ENCODE measurements at regions of chr1 and their contacts with region 1.

Region 1: GRCh38 chr1:172671591-172671990 is 12.7 kb downstream of the FASLG start:
- DNase-seq: no peak
- ATAC-seq: no peak
- H3K4me3 Mint-ChIP-seq: no peak overlapping the region
- H3K27ac Mint-ChIP-seq: no peak overlapping the region
- H3K4me1 Mint-ChIP-seq: peaks cover 71% of the 10 kb centered on the region
- H3K27me3 Mint-ChIP-seq: peaks cover 11% of the 10 kb centered on the region

Region 2: DNA sequence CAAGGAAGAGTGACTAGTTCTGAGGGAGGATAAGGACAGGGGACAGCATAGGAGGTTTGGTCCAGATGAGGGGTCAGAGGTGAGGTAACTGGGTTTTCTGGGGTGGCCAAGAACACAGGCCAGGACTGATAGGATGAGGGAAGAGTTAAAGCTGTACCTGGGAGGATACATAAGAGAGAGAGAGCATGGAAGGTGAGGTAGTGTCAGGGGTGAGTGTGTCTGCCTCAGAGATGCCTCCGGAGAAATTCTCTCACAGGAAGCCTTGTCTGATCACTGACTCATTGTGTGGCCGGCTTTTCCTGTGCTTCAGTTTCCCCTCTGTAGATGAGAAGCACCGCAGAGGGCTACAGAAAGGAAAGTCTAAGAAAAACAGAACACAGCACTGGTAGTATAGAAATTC is 27.5 kb after region 1 on chr1:
- CTCF ChIA-PET with region 1: interaction called, 6 read pairs
- POLR2A ChIA-PET with region 1: interaction called, 17 read pairs
- intact Hi-C with region 1: loop called (anchors 1 kb)
- DNase-seq: peak; percentile 82
- ATAC-seq: peak; percentile 80
- H3K4me3 Mint-ChIP-seq: peak overlapping the region; percentile 31
- H3K27ac Mint-ChIP-seq: peak overlapping the region; percentile 97
- H3K4me1 Mint-ChIP-seq: peaks cover 50% of the 10 kb centered on the region
- H3K27me3 Mint-ChIP-seq: peaks cover 4% of the 10 kb centered on the region

Region 3: DNA sequence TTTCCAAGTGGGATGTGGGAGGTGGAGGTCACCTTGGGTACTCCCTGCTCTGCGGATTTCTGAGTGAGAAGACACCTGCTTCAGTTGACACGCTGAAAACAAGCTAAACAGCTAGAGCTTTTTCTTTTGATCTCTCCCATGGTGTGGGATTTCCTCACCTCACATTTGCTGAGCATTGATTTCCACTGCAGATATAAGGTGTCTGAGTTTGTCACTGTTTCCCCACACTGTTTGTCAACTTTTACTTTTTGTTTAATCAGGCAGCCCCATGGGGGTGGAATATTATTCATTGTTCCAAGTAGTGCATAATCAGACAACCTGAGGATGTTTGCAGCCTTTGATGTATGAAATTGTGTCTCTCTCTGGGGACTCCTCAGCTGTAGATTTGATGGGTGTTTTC is 36.9 kb after region 1 on chr1:
- CTCF ChIA-PET with region 1: interaction called, 5 read pairs
- POLR2A ChIA-PET with region 1: interaction called, 5 read pairs
- intact Hi-C with region 1: loop called (anchors 2 kb)
- DNase-seq: peak; percentile 56
- ATAC-seq: peak; percentile 86
- H3K4me3 Mint-ChIP-seq: peak overlapping the region; percentile 37
- H3K27ac Mint-ChIP-seq: peak overlapping the region; percentile 47
- H3K4me1 Mint-ChIP-seq: peaks cover 13% of the 10 kb centered on the region
- H3K27me3 Mint-ChIP-seq: peaks cover 16% of the 10 kb centered on the region

Measured in activated CD4-positive, alpha-beta T cell treated with anti-CD3 and anti-CD28 coated beads for 36 hours (primary cell).